Activated CD4-positive, alpha-beta T cell treated with anti-CD3 and anti-CD28 coated beads for 36 hours (primary cell): ENCODE measurements at regions of chr1 and their contacts with region 1.

Region 1: DNA sequence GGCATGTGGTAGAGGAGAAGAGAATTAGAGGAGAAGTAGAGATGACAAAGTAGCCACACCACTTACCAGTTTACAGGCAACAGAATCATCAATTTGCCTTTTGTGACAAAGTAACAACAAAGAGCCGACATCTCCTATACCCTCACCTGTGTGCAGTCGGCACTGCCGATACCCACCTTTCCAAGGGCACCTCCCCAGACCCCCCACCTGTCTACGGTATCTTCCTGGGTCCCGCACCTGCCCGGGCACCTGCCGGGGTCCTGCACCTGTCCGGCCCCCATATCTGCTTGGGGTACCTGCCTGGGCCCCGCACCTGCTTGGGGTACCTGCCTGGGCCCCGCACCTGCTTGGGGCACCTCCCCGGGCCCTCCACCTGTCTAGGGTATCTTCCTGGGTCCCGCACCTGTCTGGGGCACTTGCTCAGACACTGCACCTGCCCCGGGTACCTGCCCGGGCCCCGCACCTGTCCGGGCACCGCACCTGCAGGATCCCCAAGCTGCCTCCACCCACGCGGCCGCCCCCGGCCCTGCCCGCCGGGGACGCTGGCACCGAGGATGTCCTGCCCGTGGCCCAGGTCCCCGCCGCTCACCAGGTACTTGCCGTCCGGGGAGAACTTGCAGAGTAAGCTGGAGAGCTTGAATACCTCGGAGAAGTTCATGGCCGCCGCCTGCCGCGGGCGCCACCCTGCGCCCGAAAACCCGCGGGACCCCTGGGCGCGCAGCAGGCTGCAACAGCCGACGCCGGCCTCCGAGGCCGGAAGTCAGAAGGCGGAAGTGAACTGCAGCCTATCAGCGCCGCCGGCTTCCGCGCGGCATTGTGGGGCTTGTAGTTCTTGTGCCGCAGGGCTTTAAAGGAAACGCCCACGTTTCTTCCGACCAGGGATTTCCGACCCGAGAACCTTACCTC is at the start of gene WRAP73:
- DNase-seq: peak; percentile 96
- ATAC-seq: peak; percentile 97
- H3K4me3 Mint-ChIP-seq: peak within 1 kb of the TSS; percentile 71
- H3K27ac Mint-ChIP-seq: no peak within 1 kb of the TSS
- H3K4me1 Mint-ChIP-seq: peaks cover 24% of the 10 kb centered on the region
- H3K27me3 Mint-ChIP-seq: peaks cover 17% of the 10 kb centered on the region
- total RNA-seq, gene WRAP73: 26.3 to 28.9 TPM

Region 2: GRCh38 chr1:3119725-3120124 is 529.9 kb before region 1 on chr1:
- CTCF ChIA-PET with region 1: no interaction called
- POLR2A ChIA-PET with region 1: no interaction called
- intact Hi-C with region 1: no loop called
- DNase-seq: no peak
- ATAC-seq: no peak
- H3K4me3 Mint-ChIP-seq: no peak overlapping the region
- H3K27ac Mint-ChIP-seq: no peak overlapping the region
- H3K4me1 Mint-ChIP-seq: no peaks in the 10 kb centered on the region
- H3K27me3 Mint-ChIP-seq: no peaks in the 10 kb centered on the region

Region 3: GRCh38 chr1:3607703-3608065 is 41.9 kb before region 1 on chr1:
- CTCF ChIA-PET with region 1: no interaction called
- POLR2A ChIA-PET with region 1: no interaction called
- intact Hi-C with region 1: no loop called
- DNase-seq: no peak
- ATAC-seq: no peak
- H3K4me3 Mint-ChIP-seq: no peak overlapping the region
- H3K27ac Mint-ChIP-seq: no peak overlapping the region
- H3K4me1 Mint-ChIP-seq: peaks cover 5% of the 10 kb centered on the region
- H3K27me3 Mint-ChIP-seq: peaks cover 13% of the 10 kb centered on the region

Region 4: DNA sequence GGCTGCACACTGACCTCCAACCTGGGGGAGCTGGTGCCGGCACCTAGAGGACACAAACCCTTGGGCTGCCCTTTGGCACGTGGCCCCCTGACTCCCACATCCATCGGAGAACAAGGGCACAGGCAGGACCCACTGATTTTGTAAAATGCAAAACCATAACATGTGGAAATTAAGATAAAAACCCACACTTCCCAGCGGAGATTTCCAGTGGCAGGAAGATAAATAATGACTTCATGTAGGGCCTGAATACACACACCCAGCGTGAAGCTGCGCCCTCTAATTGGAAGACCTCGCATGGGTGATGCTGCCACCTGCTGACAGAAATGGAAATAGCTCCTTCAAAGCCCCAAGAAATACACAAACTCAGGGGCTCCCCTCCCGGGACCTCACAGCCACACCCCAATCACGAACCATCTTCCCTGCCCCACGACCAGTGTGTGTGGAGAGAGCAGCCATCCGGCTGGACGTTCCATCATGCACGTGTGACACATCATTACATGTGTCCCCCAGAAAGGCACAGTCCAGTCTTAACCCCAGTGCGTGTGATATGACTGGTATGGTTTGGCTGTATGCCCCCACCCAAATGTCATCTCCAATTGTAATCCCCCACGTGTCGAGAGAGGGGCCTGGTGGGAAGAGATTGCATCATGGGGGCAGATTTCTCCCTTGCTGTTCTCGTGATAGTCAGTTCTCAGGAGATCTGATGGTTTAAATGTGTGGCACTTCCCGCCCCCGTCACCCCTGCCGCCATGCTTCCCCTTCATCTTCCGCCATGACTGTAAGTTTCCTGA is 30.5 kb before region 1 on chr1:
- CTCF ChIA-PET with region 1: interaction called, 11 read pairs
- POLR2A ChIA-PET with region 1: no interaction called
- intact Hi-C with region 1: loop called (anchors 1 kb)
- DNase-seq: peak; percentile 85
- ATAC-seq: peak; percentile 92
- H3K4me3 Mint-ChIP-seq: peak overlapping the region; percentile 22
- H3K27ac Mint-ChIP-seq: no peak overlapping the region
- H3K4me1 Mint-ChIP-seq: peaks cover 29% of the 10 kb centered on the region
- H3K27me3 Mint-ChIP-seq: no peaks in the 10 kb centered on the region

Region 5: DNA sequence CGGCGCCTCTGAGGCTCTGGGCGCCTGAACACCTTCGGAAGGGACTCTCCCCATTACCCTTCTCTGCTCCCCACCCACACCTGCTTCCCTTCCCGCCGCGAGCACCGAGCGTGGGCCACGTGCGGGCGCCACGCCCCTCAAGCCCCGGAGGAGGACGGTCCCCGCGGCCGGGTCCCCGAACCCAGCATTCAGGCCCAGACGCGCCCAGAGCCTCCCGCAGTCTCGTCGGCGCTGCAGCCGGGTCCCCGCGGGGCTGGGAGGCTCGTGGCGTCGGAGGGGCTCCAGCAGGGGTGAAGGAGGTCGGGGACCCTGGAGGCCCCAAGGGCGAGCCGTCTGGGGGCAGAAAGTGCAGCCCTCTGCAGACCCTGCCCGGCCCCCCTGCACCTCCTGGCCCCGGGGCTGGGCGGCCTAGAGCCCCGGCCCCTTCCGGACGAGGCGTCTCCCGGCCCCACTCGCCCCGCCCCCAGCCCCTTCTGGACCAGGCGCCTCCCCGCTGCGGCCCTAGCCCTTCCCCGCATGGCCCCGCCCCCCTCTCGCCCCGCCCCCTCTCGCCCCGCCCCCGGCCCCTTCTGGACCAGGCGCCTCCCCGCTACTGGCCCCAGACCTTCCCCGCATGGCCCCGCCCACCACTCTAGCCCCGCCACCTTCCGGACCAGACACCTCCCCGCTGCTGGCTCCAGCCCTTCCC is 122.6 kb after region 1 on chr1:
- CTCF ChIA-PET with region 1: no interaction called
- POLR2A ChIA-PET with region 1: no interaction called
- intact Hi-C with region 1: loop called in 1 of 2 experiments (anchors 1 kb)
- DNase-seq: peak; percentile 94
- ATAC-seq: peak; percentile 81
- H3K4me3 Mint-ChIP-seq: peak overlapping the region; percentile 70
- H3K27ac Mint-ChIP-seq: peak overlapping the region; percentile 78
- H3K4me1 Mint-ChIP-seq: peaks cover 10% of the 10 kb centered on the region
- H3K27me3 Mint-ChIP-seq: no peaks in the 10 kb centered on the region

Region 6: GRCh38 chr1:3856908-3857790 is 207.6 kb after region 1 on chr1 and contains the starts of genes CEP104 and DFFB:
- CTCF ChIA-PET with region 1: no interaction called
- POLR2A ChIA-PET with region 1: no interaction called
- intact Hi-C with region 1: loop called in 1 of 2 experiments (anchors 5 kb)
- DNase-seq: peak; percentile 97
- ATAC-seq: peak; percentile 99
- H3K4me3 Mint-ChIP-seq: peak within 1 kb of the TSS; percentile 95
- H3K27ac Mint-ChIP-seq: peak within 1 kb of the TSS; percentile 90
- H3K4me1 Mint-ChIP-seq: peaks cover 31% of the 10 kb centered on the region
- H3K27me3 Mint-ChIP-seq: no peaks in the 10 kb centered on the region
- total RNA-seq, gene CEP104: 33.6 to 35.5 TPM
- total RNA-seq, gene DFFB: 7.2 to 8.4 TPM